ENCODE measurements at regions of chr12 and their contacts with region 1.

Region 1: GRCh38 chr12:2583091-2583497 is 211.7 kb upstream of the FKBP4 start:
- DNase-seq: peak; percentile 51
- H3K27ac ChIP-seq: no peak overlapping the region
- CTCF ChIP-seq: peak; percentile 61

Region 2: GRCh38 chr12:2570562-2570961 is 12.5 kb before region 1 on chr12:
- CTCF ChIA-PET with region 1: interaction called, 13 read pairs
- POLR2A ChIA-PET with region 1: no interaction called
- DNase-seq: no peak
- H3K27ac ChIP-seq: no peak overlapping the region
- CTCF ChIP-seq: no peak

Region 3: DNA sequence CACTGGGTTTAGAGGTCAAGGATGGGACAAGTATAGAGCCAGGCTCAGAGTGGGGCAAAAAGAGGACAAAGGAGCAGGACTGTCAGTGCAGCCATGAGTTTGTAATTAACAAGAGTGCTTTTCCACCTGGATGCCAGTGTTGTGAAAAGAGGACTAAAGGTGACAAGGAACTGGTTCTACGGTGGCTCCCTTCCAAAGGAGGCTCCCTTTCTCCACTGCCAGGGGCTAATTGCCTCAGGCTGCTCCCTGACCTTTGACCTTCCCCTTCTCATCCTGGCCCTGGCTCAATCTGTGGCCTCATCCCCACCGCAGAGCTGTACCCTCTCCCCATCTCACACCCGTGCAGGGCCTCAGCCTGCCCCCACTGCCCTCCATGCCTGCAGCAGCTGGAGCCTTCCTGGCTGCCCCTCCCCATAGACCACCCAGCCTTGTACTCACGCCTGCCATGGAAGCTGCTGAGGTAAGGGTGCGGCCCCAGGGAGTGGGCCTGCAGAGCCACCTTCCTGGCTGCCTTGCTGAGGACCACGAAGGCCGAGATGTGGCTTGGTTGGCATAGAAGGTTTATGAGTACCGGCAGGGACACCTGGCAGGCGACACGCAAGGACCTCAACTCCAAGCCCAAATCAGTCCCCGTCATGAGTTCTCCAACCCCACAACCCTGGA is 186.9 kb after region 1 on chr12:
- CTCF ChIA-PET with region 1: no interaction called
- POLR2A ChIA-PET with region 1: no interaction called
- DNase-seq: no peak
- H3K27ac ChIP-seq: no peak overlapping the region
- CTCF ChIP-seq: no peak

Measured in RWPE1 (cell line).